ENCODE measurements at regions of chr18 and their contacts with region 1.

Region 1: GRCh38 chr18:11908182-11909060 is at the start of gene MPPE1:
- DNase-seq: peak; percentile 94
- H3K4me3 ChIP-seq: peak within 1 kb of the TSS; percentile 64 to 88 (median 75)
- H3K27ac ChIP-seq: peak within 1 kb of the TSS; percentile 95 to 99 (median 98)
- H3K4me1 ChIP-seq: peaks cover 0 to 19% (median 18%) of the 10 kb centered on the region in 4 donors
- H3K27me3 ChIP-seq: no peaks in the 10 kb centered on the region
- CTCF ChIP-seq: no peak
- EP300 ChIP-seq: no peak
- POLR2A ChIP-seq: peak; percentile 90 to 92
- total RNA-seq, gene MPPE1: 16.4 to 32.7 (median 22.1) TPM

Region 2: GRCh38 chr18:11398625-11399024 is 509.8 kb before region 1 on chr18:
- intact Hi-C with region 1: no loop called
- DNase-seq: no peak
- H3K4me3 ChIP-seq: no peak overlapping the region
- H3K27ac ChIP-seq: no peak overlapping the region
- H3K4me1 ChIP-seq: no peaks in the 10 kb centered on the region
- H3K27me3 ChIP-seq: no peaks in the 10 kb centered on the region
- CTCF ChIP-seq: no peak
- EP300 ChIP-seq: no peak
- POLR2A ChIP-seq: no peak

Region 3: GRCh38 chr18:11688989-11689668 is 219.3 kb before region 1 on chr18 and contains the start of gene GNAL:
- intact Hi-C with region 1: loop called (anchors 2 kb)
- DNase-seq: peak; percentile 88
- H3K4me3 ChIP-seq: peak within 1 kb of the TSS; percentile 58 to 80 (median 62)
- H3K27ac ChIP-seq: peak within 1 kb of the TSS; percentile 72 to 86 (median 82)
- H3K4me1 ChIP-seq: peaks cover 0 to 11% (median 8%) of the 10 kb centered on the region in 4 donors
- H3K27me3 ChIP-seq: no peaks in the 10 kb centered on the region
- CTCF ChIP-seq: no peak
- EP300 ChIP-seq: no peak
- POLR2A ChIP-seq: no peak
- total RNA-seq, gene GNAL: 13.2 to 25.1 (median 19.9) TPM

Region 4: DNA sequence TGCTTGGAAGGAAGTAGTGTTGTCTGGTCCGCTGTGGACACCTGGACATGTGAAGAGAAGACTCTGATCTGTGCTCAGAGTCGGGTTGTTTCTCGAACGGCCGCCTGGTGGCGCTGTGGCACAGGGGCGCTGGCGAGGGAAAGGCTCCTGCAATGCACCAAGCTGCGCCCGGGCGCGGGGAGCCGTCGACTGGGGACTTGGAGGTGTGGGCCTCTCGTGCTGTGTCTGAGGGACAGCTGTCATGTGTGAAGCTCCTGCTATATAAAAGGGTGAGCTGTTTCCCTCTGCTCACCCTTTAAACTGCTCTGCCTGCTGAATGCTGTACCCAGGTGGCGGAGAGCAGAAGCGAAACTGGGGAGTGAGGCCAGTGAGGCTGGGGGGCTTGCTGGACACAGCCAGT is 175.4 kb before region 1 on chr18:
- intact Hi-C with region 1: loop called (anchors 2 kb)
- DNase-seq: peak; percentile 88
- H3K4me3 ChIP-seq: peak overlapping the region in 3 of 4 donors; percentile 24 to 34 (median 26)
- H3K27ac ChIP-seq: no peak overlapping the region
- H3K4me1 ChIP-seq: peaks cover 0 to 7% (median 0%) of the 10 kb centered on the region in 4 donors
- H3K27me3 ChIP-seq: peaks cover 0 to 4% (median 0%) of the 10 kb centered on the region in 3 donors
- CTCF ChIP-seq: peak; percentile 41 to 91 (median 69)
- EP300 ChIP-seq: no peak
- POLR2A ChIP-seq: no peak

Region 5: DNA sequence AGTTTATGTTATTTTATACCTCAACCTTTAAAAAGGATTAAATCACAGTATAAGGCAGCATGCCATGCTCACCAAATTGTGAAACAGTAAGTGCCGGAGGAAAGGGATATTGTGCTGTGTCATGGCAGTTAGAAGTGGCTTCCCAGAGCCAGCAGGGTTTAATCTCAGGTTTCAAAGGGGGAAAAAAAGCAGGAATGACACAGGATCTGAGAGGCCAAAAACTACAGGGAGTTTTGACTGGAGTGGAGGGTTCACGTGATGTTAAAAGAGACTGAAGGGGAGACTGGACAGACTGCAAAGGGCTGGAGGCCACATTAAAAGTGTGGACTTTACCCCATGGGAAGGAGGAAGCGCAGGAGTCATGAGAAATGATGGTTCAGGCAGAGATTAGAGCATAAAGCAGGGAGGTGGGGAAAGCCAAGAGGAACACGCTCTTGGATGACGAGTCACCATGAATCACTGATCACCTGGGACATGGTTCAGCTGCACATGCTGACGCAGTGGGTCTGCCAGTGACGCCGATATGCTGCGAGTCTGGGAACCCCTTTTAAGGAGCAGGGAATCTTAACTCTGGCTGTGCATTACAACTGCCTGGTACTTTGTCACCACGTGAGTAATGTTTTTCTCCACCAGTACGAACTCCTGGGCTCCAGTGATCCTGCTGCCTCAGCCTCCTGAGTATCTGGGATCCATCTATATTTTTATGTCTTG is 51.1 kb before region 1 on chr18:
- intact Hi-C with region 1: loop called (anchors 2 kb)
- DNase-seq: peak; percentile 95
- H3K4me3 ChIP-seq: peak overlapping the region in 2 of 4 donors; percentile 14 to 15
- H3K27ac ChIP-seq: peak overlapping the region; percentile 81 to 99 (median 84)
- H3K4me1 ChIP-seq: peaks cover 0 to 42% (median 38%) of the 10 kb centered on the region in 4 donors
- H3K27me3 ChIP-seq: no peaks in the 10 kb centered on the region
- CTCF ChIP-seq: no peak
- EP300 ChIP-seq: peak; percentile 89 to 96 (median 95)
- POLR2A ChIP-seq: no peak

Region 6: GRCh38 chr18:11947214-11948191 is 39.1 kb after region 1 on chr18:
- intact Hi-C with region 1: loop called (anchors 5 kb)
- DNase-seq: peak; percentile 98
- H3K4me3 ChIP-seq: peak overlapping the region; percentile 42 to 60 (median 50)
- H3K27ac ChIP-seq: peak overlapping the region; percentile 88 to 99 (median 95)
- H3K4me1 ChIP-seq: peaks cover 0 to 34% (median 27%) of the 10 kb centered on the region in 4 donors
- H3K27me3 ChIP-seq: no peaks in the 10 kb centered on the region
- CTCF ChIP-seq: no peak
- EP300 ChIP-seq: peak in 2 of 4 donors; percentile 65 to 77
- POLR2A ChIP-seq: peak; percentile 19 to 45